ENCODE measurements at regions of chr3 and their contacts with region 1.

Region 1: DNA sequence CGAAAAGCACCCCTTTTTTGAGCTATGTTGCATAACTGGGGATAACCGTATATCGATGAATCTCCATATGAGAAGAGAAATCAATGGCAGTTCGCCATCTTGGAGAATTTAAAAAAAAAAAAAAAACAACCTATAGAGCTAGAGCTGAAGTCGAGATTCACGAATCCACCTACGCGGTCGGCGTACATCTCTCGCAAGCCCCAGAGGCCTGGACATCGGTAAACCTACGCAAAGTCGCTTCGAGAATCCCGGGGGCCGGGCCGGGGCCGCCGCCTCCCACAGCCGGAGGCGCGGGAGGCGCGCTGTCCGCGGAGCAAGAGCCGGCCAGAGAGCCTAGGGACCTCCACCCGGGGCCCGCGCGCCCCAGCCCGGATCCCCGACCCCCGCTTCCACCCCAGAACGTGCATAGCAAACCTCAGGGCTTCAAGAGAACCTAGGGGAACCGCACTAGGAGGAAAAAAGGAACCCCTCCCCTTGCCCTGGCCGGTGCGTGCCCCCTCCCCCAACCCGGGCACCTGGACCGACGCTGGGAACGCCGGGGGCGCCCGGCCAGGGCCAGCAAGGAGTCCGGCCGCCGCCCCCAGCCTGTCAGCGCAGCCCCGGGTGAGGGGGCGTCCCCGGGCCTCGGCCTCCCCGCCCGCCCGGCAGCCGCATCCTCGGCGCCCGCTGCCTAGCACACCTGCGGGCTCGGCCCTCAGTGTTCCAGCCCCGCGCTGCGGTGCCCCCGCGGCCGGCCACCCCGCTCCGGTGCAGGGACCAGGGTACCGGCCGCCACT is 567 bp downstream of the PFN2 start:
- DNase-seq: peak; percentile 73
- CTCF ChIP-seq: no peak

Region 2: DNA sequence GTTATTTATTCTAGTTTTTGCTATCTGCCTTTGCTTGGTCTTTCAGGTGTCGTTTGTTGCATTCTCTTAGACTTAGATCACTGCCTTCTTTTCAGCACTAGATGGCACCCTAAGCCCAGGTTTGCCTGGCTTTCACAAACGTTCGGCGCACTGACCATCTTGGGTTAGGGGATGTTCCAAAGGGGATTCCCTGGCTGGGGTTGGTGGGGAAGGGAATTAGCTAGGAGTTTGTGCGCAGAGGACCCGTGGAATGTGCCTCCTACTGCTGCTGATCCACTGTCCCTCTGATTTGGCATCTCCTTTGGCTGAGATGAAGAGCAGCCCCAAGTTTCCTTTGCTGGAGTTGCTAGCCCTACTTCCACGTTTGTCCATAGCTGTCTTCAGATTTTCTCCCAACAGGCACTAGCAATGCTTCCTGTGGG is 33.3 kb before region 1 on chr3:
- CTCF ChIA-PET with region 1: interaction called, 10 read pairs
- POLR2A ChIA-PET with region 1: no interaction called
- DNase-seq: peak; percentile 40
- CTCF ChIP-seq: peak; percentile 58

Region 3: DNA sequence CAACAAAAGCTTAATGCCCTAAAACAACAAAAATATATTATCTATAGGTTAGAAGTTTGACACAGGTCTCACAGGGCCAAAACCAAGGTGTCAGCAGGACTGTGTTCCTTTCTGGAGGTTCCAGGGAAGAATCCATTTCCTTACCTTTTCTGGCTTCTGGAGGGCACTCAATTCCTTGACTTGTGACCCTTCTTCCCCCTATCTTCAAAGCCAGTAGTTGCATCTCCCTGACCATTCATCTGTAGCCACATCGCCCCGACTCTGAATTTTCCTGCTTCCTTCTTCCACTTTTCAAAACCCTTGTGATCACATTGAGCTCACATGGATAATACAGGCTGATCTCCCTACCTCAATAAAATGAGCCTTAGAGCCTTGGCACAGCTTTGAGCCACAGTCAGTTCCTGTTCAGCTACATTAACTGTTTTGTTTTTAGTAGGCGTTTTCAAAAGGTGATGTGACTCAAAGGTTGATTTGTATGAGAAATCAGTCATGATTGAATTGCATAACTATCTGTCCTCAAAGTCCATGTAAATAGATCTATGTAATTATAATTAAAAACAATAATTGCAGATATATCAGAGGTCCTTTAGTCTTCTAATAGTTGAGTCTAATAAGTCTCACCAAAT is 11.8 kb before region 1 on chr3:
- CTCF ChIA-PET with region 1: interaction called, 15 read pairs
- POLR2A ChIA-PET with region 1: no interaction called
- DNase-seq: no peak
- CTCF ChIP-seq: no peak

Region 4: GRCh38 chr3:150220799-150221198 is 250.7 kb after region 1 on chr3:
- CTCF ChIA-PET with region 1: interaction called, 33 read pairs
- POLR2A ChIA-PET with region 1: no interaction called
- DNase-seq: no peak
- CTCF ChIP-seq: no peak